ENCODE measurements at regions of chr20 and their contacts with region 1.

Region 1: GRCh38 chr20:45971675-45972499 is at the start of gene ZNF335:
- DNase-seq: peak; percentile 96
- ATAC-seq: peak; percentile 82
- H3K4me3 ChIP-seq: peak within 1 kb of the TSS; percentile 82 to 97 (median 96)
- H3K27ac ChIP-seq: peak within 1 kb of the TSS; percentile 98
- H3K4me1 ChIP-seq: peaks cover 26% of the 10 kb centered on the region
- H3K27me3 ChIP-seq: peaks cover 0 to 7% of the 10 kb centered on the region in 2 experiments; a peak in 1 of 5 replicates
- CTCF ChIP-seq: peak; percentile 60
- EP300 ChIP-seq: peak in 1 of 2 experiments; percentile 39; a peak in 3 of 4 replicates
- POLR2A ChIP-seq: peak; percentile 65 to 95; a peak in 3 of 4 replicates
- RAD21 ChIP-seq: peak; percentile 44
- total RNA-seq, gene ZNF335: 6.0 and 13.7 TPM in 2 replicates

Region 2: GRCh38 chr20:45347936-45348778 is 623.7 kb before region 1 on chr20 and contains the start of gene SDC4:
- CTCF ChIA-PET with region 1: no interaction called
- POLR2A ChIA-PET with region 1: no interaction called
- in situ Hi-C with region 1: no loop called
- intact Hi-C with region 1: loop called (anchors 5 kb)
- DNase-seq: no peak
- ATAC-seq: peak; percentile 55
- H3K4me3 ChIP-seq: peak within 1 kb of the TSS; percentile 79 to 87 (median 87)
- H3K27ac ChIP-seq: peak within 1 kb of the TSS; percentile 53
- H3K4me1 ChIP-seq: peaks cover 69% of the 10 kb centered on the region
- H3K27me3 ChIP-seq: peaks cover 1 to 11% of the 10 kb centered on the region in 2 experiments; a peak in 2 of 5 replicates
- CTCF ChIP-seq: no peak
- EP300 ChIP-seq: no peak
- POLR2A ChIP-seq: peak; percentile 96 to 99
- RAD21 ChIP-seq: peak; percentile 44; the same call in 1 of the 2 replicates
- total RNA-seq, gene SDC4: 36.0 and 65.1 TPM in 2 replicates

Region 3: DNA sequence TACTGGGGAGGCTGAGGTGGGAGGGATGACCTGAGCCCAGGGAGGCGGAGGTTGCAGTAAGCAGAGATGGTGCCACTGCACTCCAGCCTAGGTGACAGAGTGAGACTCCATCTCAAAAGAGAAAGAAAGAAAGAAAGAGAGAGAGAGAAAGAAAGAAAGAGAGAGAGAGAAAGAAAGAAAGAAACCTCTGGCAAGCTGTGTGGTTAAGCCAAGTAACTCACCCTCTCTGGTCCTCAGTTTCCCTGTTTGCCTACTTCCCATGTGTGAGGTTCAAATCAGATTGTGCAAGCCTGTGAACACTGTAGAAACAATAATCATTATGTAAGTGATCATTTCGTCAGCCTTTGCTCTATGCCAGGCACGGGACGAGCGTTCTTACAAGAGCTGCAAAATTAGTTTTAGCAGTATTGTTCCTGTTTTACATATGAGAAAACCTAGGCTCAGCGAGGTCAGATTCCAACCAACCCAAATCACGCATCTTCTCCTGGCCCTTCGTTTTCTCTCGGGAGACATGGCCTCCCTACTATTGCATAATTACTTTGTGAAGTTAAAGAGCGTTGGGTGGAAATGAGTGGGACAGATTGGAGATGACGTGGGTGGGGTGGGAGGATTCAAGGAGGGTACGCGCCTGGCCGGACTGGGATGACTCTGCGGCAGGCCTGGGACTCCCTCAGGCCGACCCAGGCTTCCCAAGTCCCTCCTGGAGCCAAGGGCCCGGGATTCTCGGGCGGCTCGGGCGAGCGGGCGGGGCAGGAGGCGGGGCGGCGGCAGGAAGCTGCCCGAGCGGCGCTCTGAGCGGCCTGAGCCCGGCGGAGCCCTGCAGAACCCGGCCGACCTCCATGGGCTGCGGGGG is 138.6 kb before region 1 on chr20 and contains the start of gene SNX21:
- CTCF ChIA-PET with region 1: no interaction called
- POLR2A ChIA-PET with region 1: interaction called, 12 read pairs
- in situ Hi-C with region 1: no loop called
- intact Hi-C with region 1: no loop called
- DNase-seq: peak; percentile 84
- ATAC-seq: peak; percentile 92
- H3K4me3 ChIP-seq: peak within 1 kb of the TSS; percentile 71 to 87 (median 86)
- H3K27ac ChIP-seq: peak within 1 kb of the TSS; percentile 69
- H3K4me1 ChIP-seq: peaks cover 67% of the 10 kb centered on the region
- H3K27me3 ChIP-seq: no peaks in the 10 kb centered on the region
- CTCF ChIP-seq: no peak; the same call in 1 of the 2 replicates
- EP300 ChIP-seq: no peak; a peak in 1 of 4 replicates
- POLR2A ChIP-seq: peak; percentile 83 to 89; a peak in 3 of 4 replicates
- RAD21 ChIP-seq: no peak
- total RNA-seq, gene SNX21: 9.3 and 12.8 TPM in 2 replicates

Region 4: GRCh38 chr20:45924391-45925261 is 47.3 kb before region 1 on chr20:
- CTCF ChIA-PET with region 1: no interaction called
- POLR2A ChIA-PET with region 1: interaction called, 12 read pairs
- in situ Hi-C with region 1: no loop called
- intact Hi-C with region 1: no loop called
- DNase-seq: peak; percentile 66
- ATAC-seq: peak; percentile 15
- H3K4me3 ChIP-seq: peak overlapping the region in 2 of 3 experiments; percentile 20 to 52; a peak in 2 of 6 replicates
- H3K27ac ChIP-seq: no peak overlapping the region
- H3K4me1 ChIP-seq: peaks cover 84% of the 10 kb centered on the region
- H3K27me3 ChIP-seq: no peaks in the 10 kb centered on the region; a peak in 1 of 5 replicates
- CTCF ChIP-seq: no peak
- EP300 ChIP-seq: no peak
- POLR2A ChIP-seq: no peak
- RAD21 ChIP-seq: peak; percentile 25; the same call in 1 of the 2 replicates

Region 5: GRCh38 chr20:45946149-45946970 is 25.5 kb before region 1 on chr20:
- CTCF ChIA-PET with region 1: no interaction called
- POLR2A ChIA-PET with region 1: interaction called, 51 read pairs
- in situ Hi-C with region 1: no loop called
- intact Hi-C with region 1: no loop called
- DNase-seq: peak; percentile 97
- ATAC-seq: peak; percentile 83
- H3K4me3 ChIP-seq: no peak overlapping the region
- H3K27ac ChIP-seq: peak overlapping the region; percentile 65
- H3K4me1 ChIP-seq: peaks cover 30% of the 10 kb centered on the region
- H3K27me3 ChIP-seq: no peaks in the 10 kb centered on the region
- CTCF ChIP-seq: peak; percentile 46
- EP300 ChIP-seq: peak; percentile 64 to 80; a peak in 3 of 4 replicates
- POLR2A ChIP-seq: peak; percentile 2 to 37; a peak in 2 of 4 replicates
- RAD21 ChIP-seq: peak; percentile 12; the same call in 1 of the 2 replicates

Region 6: GRCh38 chr20:46013826-46014516 is 42.1 kb after region 1 on chr20:
- CTCF ChIA-PET with region 1: interaction called, 11 read pairs
- POLR2A ChIA-PET with region 1: no interaction called
- in situ Hi-C with region 1: no loop called
- intact Hi-C with region 1: loop called (anchors 5 kb)
- DNase-seq: peak; percentile 47
- ATAC-seq: peak; percentile 88
- H3K4me3 ChIP-seq: peak overlapping the region in 2 of 3 experiments; percentile 6 to 64; a peak in 4 of 6 replicates
- H3K27ac ChIP-seq: no peak overlapping the region
- H3K4me1 ChIP-seq: peaks cover 57% of the 10 kb centered on the region
- H3K27me3 ChIP-seq: peaks cover 28 to 50% of the 10 kb centered on the region in 2 experiments; a peak in 4 of 5 replicates
- CTCF ChIP-seq: peak; percentile 82
- EP300 ChIP-seq: no peak
- POLR2A ChIP-seq: no peak
- RAD21 ChIP-seq: peak; percentile 98

Region 7: GRCh38 chr20:46089417-46090388 is 117.8 kb after region 1 on chr20 and contains the start of gene NCOA5:
- CTCF ChIA-PET with region 1: no interaction called
- POLR2A ChIA-PET with region 1: interaction called, 3 read pairs
- in situ Hi-C with region 1: no loop called
- intact Hi-C with region 1: loop called (anchors 5 kb)
- DNase-seq: peak; percentile 95
- ATAC-seq: peak; percentile 93
- H3K4me3 ChIP-seq: peak within 1 kb of the TSS; percentile 70 to 98 (median 92)
- H3K27ac ChIP-seq: peak within 1 kb of the TSS; percentile 92
- H3K4me1 ChIP-seq: peaks cover 45% of the 10 kb centered on the region
- H3K27me3 ChIP-seq: no peaks in the 10 kb centered on the region; a peak in 1 of 5 replicates
- CTCF ChIP-seq: peak; percentile 91
- EP300 ChIP-seq: peak; percentile 14 to 40; a peak in 2 of 4 replicates
- POLR2A ChIP-seq: peak; percentile 94 to 96
- RAD21 ChIP-seq: peak; percentile 89
- total RNA-seq, gene NCOA5: 28.4 and 37.7 TPM in 2 replicates

Measured in HepG2 (cell line).